Endothelial cell of umbilical vein (primary cell): ENCODE measurements at regions of chr3 and their contacts with region 1.

Region 1: GRCh38 chr3:64533617-64534317 is 154.0 kb downstream of the ADAMTS9 start:
- DNase-seq: peak; percentile 86
- H3K4me3 ChIP-seq: no peak overlapping the region
- H3K27ac ChIP-seq: peak overlapping the region; percentile 4
- H3K4me1 ChIP-seq: no peaks in the 10 kb centered on the region
- H3K27me3 ChIP-seq: no peaks in the 10 kb centered on the region
- CTCF ChIP-seq: peak; percentile 90
- POLR2A ChIP-seq: no peak

Region 2: GRCh38 chr3:64642327-64643151 is 108.8 kb after region 1 on chr3:
- CTCF ChIA-PET with region 1: no interaction called
- POLR2A ChIA-PET with region 1: no interaction called
- dilution Hi-C with region 1: no loop called
- intact Hi-C with region 1: no loop called
- DNase-seq: no peak
- H3K4me3 ChIP-seq: no peak overlapping the region
- H3K27ac ChIP-seq: no peak overlapping the region
- H3K4me1 ChIP-seq: peaks cover 5% of the 10 kb centered on the region
- H3K27me3 ChIP-seq: no peaks in the 10 kb centered on the region
- CTCF ChIP-seq: no peak
- POLR2A ChIP-seq: no peak

Region 3: GRCh38 chr3:64685800-64686445 is 152.2 kb after region 1 on chr3:
- CTCF ChIA-PET with region 1: interaction called, 10 read pairs
- POLR2A ChIA-PET with region 1: no interaction called
- dilution Hi-C with region 1: no loop called
- intact Hi-C with region 1: loop called (anchors 1 kb)
- DNase-seq: peak; percentile 96
- H3K4me3 ChIP-seq: peak overlapping the region; percentile 61 to 89 (median 88)
- H3K27ac ChIP-seq: peak overlapping the region; percentile 84
- H3K4me1 ChIP-seq: peaks cover 17% of the 10 kb centered on the region
- H3K27me3 ChIP-seq: no peaks in the 10 kb centered on the region
- CTCF ChIP-seq: peak; percentile 10 to 51
- POLR2A ChIP-seq: peak; percentile 70

Region 4: DNA sequence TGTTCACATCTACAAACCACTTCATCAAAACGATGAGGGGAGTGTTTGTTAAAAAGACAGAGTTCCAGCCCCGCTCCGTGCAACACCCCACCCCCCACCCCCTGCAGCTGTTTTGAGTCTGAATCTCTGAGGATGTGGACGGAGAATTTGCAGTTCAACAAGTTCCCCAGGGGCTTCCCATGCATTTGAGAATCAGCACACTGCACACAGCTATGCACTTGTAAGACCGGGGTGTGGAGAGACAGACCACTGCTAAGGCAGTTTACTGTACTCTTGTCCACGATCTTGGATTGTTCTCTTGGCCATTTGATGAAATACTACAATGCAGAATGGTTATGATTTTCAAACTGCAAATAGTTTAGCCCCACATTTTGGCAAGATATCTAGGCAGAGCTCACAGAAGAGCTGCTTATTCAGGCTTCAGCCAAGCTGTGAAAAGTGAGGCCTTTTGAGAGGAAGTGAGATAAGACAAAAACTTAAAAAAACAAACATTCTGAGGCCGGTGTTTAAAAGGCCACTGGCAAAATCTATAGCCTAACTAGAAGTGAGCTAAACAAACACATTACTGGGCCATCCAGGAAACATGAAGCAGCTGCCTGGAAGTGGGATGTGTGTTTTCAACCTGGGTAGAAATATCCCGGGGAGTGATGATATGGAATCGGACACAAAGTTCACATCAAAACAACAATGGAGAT is 462.2 kb after region 1 on chr3:
- CTCF ChIA-PET with region 1: no interaction called
- POLR2A ChIA-PET with region 1: no interaction called
- dilution Hi-C with region 1: no loop called
- intact Hi-C with region 1: loop called (anchors 5 kb)
- DNase-seq: peak; percentile 91
- H3K4me3 ChIP-seq: no peak overlapping the region
- H3K27ac ChIP-seq: peak overlapping the region; percentile 60
- H3K4me1 ChIP-seq: peaks cover 33% of the 10 kb centered on the region
- H3K27me3 ChIP-seq: no peaks in the 10 kb centered on the region
- CTCF ChIP-seq: no peak
- POLR2A ChIP-seq: no peak

Region 5: GRCh38 chr3:65334045-65334665 is 800.4 kb after region 1 on chr3:
- CTCF ChIA-PET with region 1: interaction called, 11 read pairs
- POLR2A ChIA-PET with region 1: no interaction called
- dilution Hi-C with region 1: no loop called
- intact Hi-C with region 1: no loop called
- DNase-seq: peak; percentile 63
- H3K4me3 ChIP-seq: no peak overlapping the region
- H3K27ac ChIP-seq: no peak overlapping the region
- H3K4me1 ChIP-seq: no peaks in the 10 kb centered on the region
- H3K27me3 ChIP-seq: peaks cover 0 to 11% of the 10 kb centered on the region in 2 experiments
- CTCF ChIP-seq: peak; percentile 23 to 26
- POLR2A ChIP-seq: no peak

Region 6: GRCh38 chr3:65439641-65440284 is 906.0 kb after region 1 on chr3:
- CTCF ChIA-PET with region 1: interaction called, 18 read pairs
- POLR2A ChIA-PET with region 1: no interaction called
- dilution Hi-C with region 1: no loop called
- intact Hi-C with region 1: loop called (anchors 1 kb)
- DNase-seq: peak; percentile 59
- H3K4me3 ChIP-seq: no peak overlapping the region
- H3K27ac ChIP-seq: no peak overlapping the region
- H3K4me1 ChIP-seq: no peaks in the 10 kb centered on the region
- H3K27me3 ChIP-seq: no peaks in the 10 kb centered on the region
- CTCF ChIP-seq: peak; percentile 35 to 66
- POLR2A ChIP-seq: no peak

Region 7: DNA sequence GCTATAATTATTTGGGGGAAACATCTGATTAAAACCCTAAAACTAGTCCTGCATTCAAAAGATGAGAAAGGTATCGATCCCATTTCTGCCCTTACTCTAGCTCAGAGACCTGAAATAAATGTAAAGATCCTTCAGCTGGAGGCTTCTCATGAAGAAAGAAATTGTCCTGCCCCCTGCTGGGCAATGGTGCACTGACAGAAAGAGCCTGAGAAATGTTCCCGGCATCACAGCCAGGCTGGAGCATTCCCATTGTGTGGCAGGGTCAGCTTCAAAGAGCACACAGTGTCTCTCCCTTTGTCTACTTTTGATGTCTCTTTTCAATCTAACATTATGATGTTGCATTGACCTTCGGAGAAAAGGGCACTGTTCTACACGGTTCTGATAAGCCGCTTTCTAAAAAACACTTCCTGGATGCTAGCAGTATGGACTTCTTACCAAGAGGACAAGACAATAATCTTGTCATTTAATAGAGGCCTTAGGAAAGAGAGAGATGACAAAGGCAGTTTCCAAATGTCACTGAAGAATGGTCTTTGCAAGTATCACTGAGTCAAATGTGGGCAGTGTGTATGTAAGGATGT is 1217.4 kb after region 1 on chr3:
- CTCF ChIA-PET with region 1: interaction called, 42 read pairs
- POLR2A ChIA-PET with region 1: no interaction called
- dilution Hi-C with region 1: no loop called
- intact Hi-C with region 1: loop called (anchors 5 kb)
- DNase-seq: peak; percentile 52
- H3K4me3 ChIP-seq: no peak overlapping the region
- H3K27ac ChIP-seq: no peak overlapping the region
- H3K4me1 ChIP-seq: no peaks in the 10 kb centered on the region
- H3K27me3 ChIP-seq: no peaks in the 10 kb centered on the region
- CTCF ChIP-seq: peak; percentile 76 to 79
- POLR2A ChIP-seq: no peak